Breast epithelium (tissue), 4 donors: ENCODE measurements at regions of chr11 and their contacts with region 1.

Region 1: GRCh38 chr11:44893846-44894617 is 56.7 kb downstream of the TP53I11 start:
- DNase-seq: no peak
- H3K4me3 ChIP-seq: no peak overlapping the region
- H3K27ac ChIP-seq: no peak overlapping the region
- H3K4me1 ChIP-seq: no peaks in the 10 kb centered on the region
- H3K27me3 ChIP-seq: peaks cover 0 to 6% of the 10 kb centered on the region in 2 donors
- CTCF ChIP-seq: peak in 2 of 3 donors; percentile 44 to 52
- POLR2A ChIP-seq: no peak

Region 2: DNA sequence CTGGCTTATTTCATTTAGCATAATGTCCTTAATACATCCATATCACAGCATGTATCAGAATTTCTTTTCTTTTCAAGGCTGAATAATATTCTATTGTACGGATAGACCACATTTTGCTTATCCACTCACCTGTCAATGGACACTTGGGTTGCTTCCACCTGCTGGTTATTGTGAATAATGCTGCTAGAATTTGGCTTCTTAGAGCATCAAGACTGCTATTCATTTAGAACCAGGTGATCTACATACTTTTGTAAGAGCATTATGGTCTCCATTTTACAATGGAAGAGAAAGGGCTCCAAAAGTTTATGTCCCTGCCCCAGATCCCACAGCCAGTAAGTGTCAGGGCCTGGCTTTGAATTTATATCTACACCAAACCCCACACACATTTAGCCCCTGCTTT is 429.3 kb before region 1 on chr11:
- intact Hi-C with region 1: loop called (anchors 10 kb)
- DNase-seq: no peak
- H3K4me3 ChIP-seq: no peak overlapping the region
- H3K27ac ChIP-seq: no peak overlapping the region
- H3K4me1 ChIP-seq: no peaks in the 10 kb centered on the region
- H3K27me3 ChIP-seq: no peaks in the 10 kb centered on the region
- CTCF ChIP-seq: no peak
- POLR2A ChIP-seq: no peak

Region 3: GRCh38 chr11:44950625-44951476 is 56.8 kb after region 1 on chr11 and contains the start of gene TP53I11:
- intact Hi-C with region 1: no loop called
- DNase-seq: peak; percentile 54 to 77
- H3K4me3 ChIP-seq: peak within 1 kb of the TSS; percentile 66 to 99 (median 91)
- H3K27ac ChIP-seq: peak within 1 kb of the TSS; percentile 90 to 95
- H3K4me1 ChIP-seq: no peaks in the 10 kb centered on the region
- H3K27me3 ChIP-seq: no peaks in the 10 kb centered on the region
- CTCF ChIP-seq: peak in 2 of 3 donors; percentile 21 to 42
- POLR2A ChIP-seq: no peak
- total RNA-seq, gene TP53I11: 30.7 to 91.1 (median 75.7) TPM